Stomach (tissue), 19 donors: ENCODE measurements at regions of chr2 and their contacts with region 1.

Region 1: DNA sequence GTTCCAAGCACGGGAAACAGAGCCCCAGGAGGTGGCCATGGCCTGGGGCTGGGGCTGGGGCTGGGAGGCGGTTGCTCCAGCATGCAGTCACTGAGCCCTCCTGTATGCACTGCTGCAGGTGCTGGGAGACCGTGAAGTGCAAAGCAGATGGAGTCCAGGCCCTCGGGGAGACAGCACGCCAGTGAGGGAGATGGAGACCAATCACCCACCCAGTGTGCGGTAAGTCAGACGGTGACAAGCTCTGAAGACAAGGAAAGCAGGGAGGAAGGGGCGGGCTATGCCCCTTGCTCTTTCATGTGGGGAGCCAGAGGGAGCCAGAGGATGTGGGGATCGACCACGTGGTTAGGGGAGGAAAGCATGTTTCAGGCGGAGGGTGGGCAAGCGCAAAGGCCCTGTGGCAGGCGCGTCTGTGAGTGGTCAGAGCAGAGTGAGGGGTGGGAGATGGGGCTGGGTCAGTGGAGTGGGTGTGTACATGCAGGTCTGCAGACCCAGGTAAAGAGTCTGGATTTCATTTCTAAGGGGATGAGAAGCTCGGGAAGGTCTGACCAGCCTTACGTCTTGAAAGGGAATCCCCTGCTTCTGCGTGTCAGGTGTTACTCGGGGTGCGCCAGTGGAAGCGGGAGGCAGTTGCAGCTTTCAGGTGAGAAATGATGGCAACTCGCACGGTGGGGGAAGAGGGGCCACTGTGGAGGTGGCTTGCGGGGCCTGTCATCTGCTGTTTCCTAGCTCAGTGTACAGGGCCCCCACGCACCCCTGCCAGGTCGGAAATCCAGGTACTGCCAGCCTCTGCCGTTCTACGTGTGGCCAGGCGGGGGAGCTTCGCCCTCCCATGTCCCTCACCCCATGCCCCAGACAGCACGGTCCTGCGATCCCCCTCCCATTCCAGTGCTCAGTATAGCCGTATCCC is 19.4 kb downstream of the RRM2 start:
- DNase-seq: peak; percentile 59 to 66
- H3K4me3 ChIP-seq: no peak overlapping the region
- H3K27ac ChIP-seq: no peak overlapping the region
- H3K4me1 ChIP-seq: peaks cover 0 to 10% (median 5%) of the 10 kb centered on the region in 4 donors
- H3K27me3 ChIP-seq: no peaks in the 10 kb centered on the region
- CTCF ChIP-seq: peak in 5 of 7 experiments; percentile 45 to 75 (median 58)
- EP300 ChIP-seq: no peak
- POLR2A ChIP-seq: no peak

Region 2: DNA sequence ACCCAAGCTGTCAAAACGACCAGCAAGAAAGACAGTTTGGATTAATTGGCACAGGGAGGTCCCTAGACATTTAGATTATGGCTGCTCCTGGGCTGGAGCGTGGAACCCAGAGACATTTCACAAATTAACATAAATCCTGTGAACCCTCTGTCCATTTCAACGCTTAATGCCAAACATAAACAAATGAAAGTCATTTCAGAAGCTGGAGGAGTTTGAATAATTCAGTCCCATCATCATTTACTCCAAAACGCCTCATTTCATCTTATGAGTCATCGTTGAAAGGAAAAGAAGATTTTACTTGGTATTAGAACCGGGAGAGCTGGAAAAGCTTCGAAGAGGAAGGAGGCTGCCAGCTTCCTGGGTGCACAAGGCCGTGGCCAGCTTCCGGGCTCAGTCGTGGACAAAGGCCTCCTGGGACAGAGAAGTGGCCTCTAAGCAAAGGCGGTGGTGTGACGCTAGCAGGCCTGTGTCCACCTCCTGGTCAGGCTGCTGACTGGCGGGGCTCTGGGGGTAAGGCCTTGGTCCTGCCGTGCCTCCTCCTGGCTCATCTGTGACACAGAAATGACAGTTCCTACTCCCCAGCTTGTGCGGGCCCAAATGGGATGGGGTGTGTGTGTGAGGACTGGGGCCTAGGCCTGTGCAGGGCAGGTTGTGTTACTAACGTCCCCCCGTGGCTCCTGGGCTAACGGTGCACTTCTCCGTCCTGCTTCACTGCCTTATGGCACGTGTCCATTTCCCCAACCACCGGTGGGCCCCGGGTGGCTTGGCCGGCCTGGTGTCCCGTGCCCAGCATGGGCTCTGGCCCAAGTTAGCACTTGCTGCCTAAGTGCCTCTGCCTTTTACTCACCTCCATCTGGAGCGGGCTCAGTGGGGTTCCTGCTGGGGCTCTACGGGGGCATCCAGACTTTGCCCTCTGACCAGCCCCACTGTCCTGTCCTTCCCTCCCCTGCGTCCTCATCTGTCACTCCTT is 52.1 kb after region 1 on chr2:
- intact Hi-C with region 1: no loop called
- DNase-seq: peak in 1 of 2 donors; percentile 45
- H3K4me3 ChIP-seq: no peak overlapping the region
- H3K27ac ChIP-seq: no peak overlapping the region
- H3K4me1 ChIP-seq: peaks cover 0 to 21% (median 13%) of the 10 kb centered on the region in 4 donors
- H3K27me3 ChIP-seq: no peaks in the 10 kb centered on the region
- CTCF ChIP-seq: no peak
- EP300 ChIP-seq: no peak
- POLR2A ChIP-seq: no peak

Region 3: DNA sequence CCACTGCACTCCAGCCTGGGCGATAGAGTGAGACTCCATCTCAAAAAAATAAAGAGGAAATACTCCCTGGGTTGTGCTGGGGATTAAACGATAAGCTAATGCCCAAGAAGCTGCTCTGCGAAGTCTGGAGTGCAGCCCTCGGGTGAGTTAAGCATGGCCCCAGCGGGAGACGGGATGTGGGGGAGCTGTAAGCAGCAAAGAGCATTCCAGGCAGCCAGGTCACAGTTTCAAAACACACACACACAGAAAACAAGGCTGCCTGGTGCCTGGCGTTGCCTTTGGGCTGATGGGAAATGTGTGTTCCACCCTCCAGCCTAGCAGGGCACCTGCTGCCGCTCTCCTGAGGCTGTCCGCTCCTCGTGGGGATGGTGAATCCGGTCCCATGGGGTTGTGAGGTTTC is 282.1 kb after region 1 on chr2:
- intact Hi-C with region 1: loop called (anchors 10 kb)
- DNase-seq: no peak
- H3K4me3 ChIP-seq: no peak overlapping the region
- H3K27ac ChIP-seq: no peak overlapping the region
- H3K4me1 ChIP-seq: peaks cover 0 to 5% (median 0%) of the 10 kb centered on the region in 4 donors
- H3K27me3 ChIP-seq: no peaks in the 10 kb centered on the region
- CTCF ChIP-seq: no peak
- EP300 ChIP-seq: no peak
- POLR2A ChIP-seq: no peak